Left ventricle myocardium inferior (tissue), 1 donor: ENCODE measurements at regions of chr3 and their contacts with region 1.

Region 1: DNA sequence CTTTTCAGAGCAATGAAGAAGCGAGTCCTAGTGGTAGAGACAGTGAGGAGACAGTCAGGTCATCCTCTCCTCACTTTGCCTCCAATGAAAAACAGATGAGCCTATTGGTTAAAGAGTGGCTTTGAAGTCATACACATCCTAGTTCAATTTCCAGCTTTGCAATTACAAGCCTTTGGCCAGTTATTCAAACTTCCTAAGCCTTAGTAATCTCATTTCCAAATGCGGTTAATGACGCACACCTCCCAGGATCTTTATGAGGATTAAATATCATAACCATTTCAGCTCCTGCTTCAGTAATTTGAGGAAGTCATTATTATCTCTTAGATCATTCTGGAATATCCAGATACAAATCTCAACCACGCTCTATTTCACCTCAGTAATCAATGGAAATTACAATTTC is 10.0 kb upstream of the ST6GAL1 start:
- DNase-seq: no peak
- H3K4me3 ChIP-seq: no peak overlapping the region
- H3K27ac ChIP-seq: no peak overlapping the region
- H3K4me1 ChIP-seq: no peaks in the 10 kb centered on the region
- H3K27me3 ChIP-seq: no peaks in the 10 kb centered on the region
- CTCF ChIP-seq: no peak

Region 2: DNA sequence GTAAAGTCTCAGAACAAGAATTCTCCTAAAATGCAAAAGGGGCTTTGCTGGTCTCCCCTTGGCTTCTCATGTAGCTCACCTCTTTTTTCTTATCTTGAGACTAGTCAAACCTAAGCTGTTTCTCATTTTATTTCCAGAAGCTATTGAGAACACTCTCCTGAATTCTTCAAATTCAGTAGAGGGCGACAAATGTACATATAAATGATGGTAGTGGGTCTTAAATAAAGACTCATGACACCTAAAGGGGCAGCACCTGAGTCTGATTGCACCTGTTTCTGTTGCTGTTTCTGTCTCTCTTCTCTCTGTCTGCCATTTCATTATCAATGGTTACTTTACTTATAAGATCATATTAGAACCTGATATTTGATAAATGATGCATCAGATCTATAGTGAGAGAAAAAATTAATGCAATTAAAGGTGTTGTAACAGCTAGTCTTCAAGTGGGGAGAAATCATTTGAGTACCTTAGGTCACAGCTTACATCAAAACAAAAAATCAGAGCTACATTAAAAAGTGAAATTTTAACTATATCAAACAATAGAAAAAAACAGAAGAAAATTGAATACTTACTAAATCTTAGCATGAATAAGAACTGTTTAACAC is 70.8 kb before region 1 on chr3:
- intact Hi-C with region 1: loop called (anchors 10 kb)
- DNase-seq: no peak
- H3K4me3 ChIP-seq: no peak overlapping the region
- H3K27ac ChIP-seq: no peak overlapping the region
- H3K4me1 ChIP-seq: no peaks in the 10 kb centered on the region
- H3K27me3 ChIP-seq: peaks cover 24% of the 10 kb centered on the region
- CTCF ChIP-seq: peak; percentile 73